ENCODE measurements at regions of chr12 and their contacts with region 1.

Region 1: DNA sequence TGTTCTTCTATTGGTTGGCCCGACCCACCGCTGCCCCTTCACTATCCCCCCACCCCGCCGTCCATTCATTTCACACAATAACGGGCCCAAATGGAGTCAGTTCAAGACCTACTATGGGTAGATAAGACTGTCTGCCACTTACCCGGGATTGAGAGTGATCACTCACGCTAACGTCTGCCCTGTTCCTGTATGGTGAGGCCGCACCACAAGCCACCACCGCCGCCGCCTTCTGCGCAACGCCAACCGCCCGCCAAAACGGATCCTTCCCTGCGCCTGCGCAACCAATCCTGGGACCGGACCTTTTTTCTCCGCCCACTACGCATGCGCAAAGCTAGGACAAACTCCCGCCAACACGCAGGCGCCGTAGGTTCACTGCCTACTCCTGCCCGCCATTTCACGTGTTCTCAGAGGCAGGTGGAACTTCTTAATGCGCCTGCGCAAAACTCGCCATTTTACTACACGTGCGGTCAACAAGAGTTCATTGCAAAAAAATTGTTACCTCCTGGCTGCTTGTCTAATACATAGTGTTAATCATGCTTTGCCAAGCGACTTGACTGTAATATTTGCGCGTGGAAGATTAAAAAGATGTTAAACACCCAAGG is at the start of gene CBX5:
- DNase-seq: peak; percentile 100
- ATAC-seq: peak; percentile 44
- H3K4me3 ChIP-seq: peak within 1 kb of the TSS; percentile 79 to 99 (median 99)
- H3K4me3 Mint-ChIP-seq: no peak within 1 kb of the TSS
- H3K27ac ChIP-seq: peak within 1 kb of the TSS; percentile 96 to 97
- H3K27ac Mint-ChIP-seq: no peak within 1 kb of the TSS
- H3K4me1 ChIP-seq: peaks cover 50 to 54% of the 10 kb centered on the region in 2 donors
- H3K4me1 Mint-ChIP-seq: peaks cover 49% of the 10 kb centered on the region
- H3K27me3 ChIP-seq: no peaks in the 10 kb centered on the region
- H3K27me3 Mint-ChIP-seq: no peaks in the 10 kb centered on the region
- CTCF ChIP-seq: no peak
- total RNA-seq, gene CBX5: 64.8 and 66.2 TPM in 2 replicates

Region 2: GRCh38 chr12:54191550-54192022 is 88.4 kb before region 1 on chr12:
- CTCF ChIA-PET with region 1: no interaction called
- POLR2A ChIA-PET with region 1: interaction called, 3 read pairs
- intact Hi-C with region 1: loop called (anchors 1 kb)
- DNase-seq: peak; percentile 90
- ATAC-seq: peak; percentile 64
- H3K4me3 ChIP-seq: no peak overlapping the region
- H3K4me3 Mint-ChIP-seq: no peak overlapping the region
- H3K27ac ChIP-seq: no peak overlapping the region
- H3K27ac Mint-ChIP-seq: peak overlapping the region; percentile 61
- H3K4me1 ChIP-seq: peaks cover 27 to 42% of the 10 kb centered on the region in 2 donors
- H3K4me1 Mint-ChIP-seq: peaks cover 41% of the 10 kb centered on the region
- H3K27me3 ChIP-seq: peaks cover 0 to 42% (median 12%) of the 10 kb centered on the region in 4 experiments
- H3K27me3 Mint-ChIP-seq: peaks cover 35% of the 10 kb centered on the region
- CTCF ChIP-seq: peak; percentile 77

Region 3: DNA sequence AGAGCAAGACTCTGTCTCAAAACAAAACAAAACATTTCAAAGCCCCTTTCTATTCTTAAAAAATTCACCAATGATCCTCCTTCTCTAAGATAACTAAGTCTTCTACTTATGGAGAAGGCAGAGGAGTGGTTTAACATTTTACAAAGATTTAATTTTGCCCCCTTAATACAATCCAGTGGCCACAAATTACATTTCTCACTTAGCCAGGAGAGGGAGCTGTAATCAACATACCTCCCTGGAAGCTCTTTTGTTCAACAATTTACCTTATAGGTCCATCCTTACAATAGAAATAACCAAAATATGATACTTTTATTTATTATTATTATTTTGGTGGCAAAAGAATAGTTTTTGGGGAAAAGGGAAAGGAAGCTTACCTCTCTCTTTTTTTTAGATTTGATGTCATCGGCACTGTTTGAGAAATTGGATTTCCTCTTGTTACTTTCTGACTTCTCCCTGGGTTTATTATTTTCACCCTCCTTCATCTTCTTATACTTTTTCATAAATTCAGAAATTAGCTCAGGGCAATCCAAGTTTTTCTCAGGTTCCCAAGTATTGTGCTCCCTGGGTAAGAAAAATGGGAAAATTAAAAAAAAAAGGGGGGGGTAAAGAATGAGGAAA is 28.2 kb before region 1 on chr12:
- CTCF ChIA-PET with region 1: interaction called, 10 read pairs
- POLR2A ChIA-PET with region 1: interaction called, 9 read pairs
- intact Hi-C with region 1: no loop called
- DNase-seq: peak; percentile 63
- ATAC-seq: peak; percentile 56
- H3K4me3 ChIP-seq: no peak overlapping the region
- H3K4me3 Mint-ChIP-seq: no peak overlapping the region
- H3K27ac ChIP-seq: no peak overlapping the region
- H3K27ac Mint-ChIP-seq: no peak overlapping the region
- H3K4me1 ChIP-seq: peaks cover 0 to 4% of the 10 kb centered on the region in 2 donors
- H3K4me1 Mint-ChIP-seq: peaks cover 6% of the 10 kb centered on the region
- H3K27me3 ChIP-seq: no peaks in the 10 kb centered on the region
- H3K27me3 Mint-ChIP-seq: no peaks in the 10 kb centered on the region
- CTCF ChIP-seq: peak; percentile 77

Region 4: DNA sequence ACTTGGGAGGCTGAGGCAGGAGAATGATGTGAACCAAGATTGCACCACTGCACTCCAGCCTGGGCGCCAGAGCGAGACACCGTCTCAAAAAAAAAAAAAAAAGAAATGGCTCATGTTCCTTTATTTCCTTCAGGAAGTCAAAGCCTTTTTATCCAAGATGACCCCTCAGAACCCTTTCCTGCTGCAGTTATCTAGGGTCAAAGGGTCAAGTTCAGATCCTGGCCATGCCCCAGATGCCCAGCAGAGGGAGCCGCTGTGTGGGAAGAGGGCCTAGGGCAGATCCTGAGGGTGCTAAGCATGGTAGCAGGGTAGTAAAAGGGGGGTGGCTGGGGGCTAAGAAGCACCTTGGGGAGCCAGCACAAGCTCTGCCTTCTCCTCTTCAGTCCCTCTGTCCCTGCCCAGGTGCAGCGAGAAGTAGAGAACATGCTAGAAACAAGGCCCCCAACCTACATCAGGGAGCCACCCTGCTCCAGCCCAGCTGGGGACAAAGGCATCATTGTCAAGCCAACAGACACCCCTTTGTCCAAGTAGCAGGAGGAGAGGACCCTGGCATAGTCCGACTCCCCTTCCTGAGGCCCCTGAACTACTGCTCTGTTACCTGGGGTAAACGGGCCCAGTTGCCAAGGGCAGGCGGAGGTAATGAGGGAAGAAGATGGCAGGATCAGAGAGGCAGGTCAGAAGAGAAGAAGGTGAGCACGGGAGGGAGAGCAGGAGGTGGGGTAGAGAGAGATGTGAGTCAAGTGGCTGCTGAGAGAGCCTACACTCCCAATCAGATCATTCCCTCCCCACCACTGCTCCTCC is 14.4 kb after region 1 on chr12:
- CTCF ChIA-PET with region 1: interaction called, 16 read pairs
- POLR2A ChIA-PET with region 1: interaction called, 6 read pairs
- intact Hi-C with region 1: no loop called
- DNase-seq: peak; percentile 59
- ATAC-seq: peak; percentile 74
- H3K4me3 ChIP-seq: no peak overlapping the region
- H3K4me3 Mint-ChIP-seq: no peak overlapping the region
- H3K27ac ChIP-seq: no peak overlapping the region
- H3K27ac Mint-ChIP-seq: no peak overlapping the region
- H3K4me1 ChIP-seq: peaks cover 15 to 18% of the 10 kb centered on the region in 2 donors
- H3K4me1 Mint-ChIP-seq: peaks cover 15% of the 10 kb centered on the region
- H3K27me3 ChIP-seq: peaks cover 0 to 16% (median 6%) of the 10 kb centered on the region in 4 experiments
- H3K27me3 Mint-ChIP-seq: peaks cover 15% of the 10 kb centered on the region
- CTCF ChIP-seq: peak; percentile 48

Region 5: GRCh38 chr12:54359033-54359761 is 79.2 kb after region 1 on chr12:
- CTCF ChIA-PET with region 1: interaction called, 4 read pairs
- POLR2A ChIA-PET with region 1: interaction called, 8 read pairs
- intact Hi-C with region 1: loop called (anchors 1 kb)
- DNase-seq: peak; percentile 96
- ATAC-seq: peak; percentile 98
- H3K4me3 ChIP-seq: peak overlapping the region; percentile 56 to 92 (median 85)
- H3K4me3 Mint-ChIP-seq: no peak overlapping the region
- H3K27ac ChIP-seq: peak overlapping the region; percentile 40 to 81
- H3K27ac Mint-ChIP-seq: no peak overlapping the region
- H3K4me1 ChIP-seq: peaks cover 15 to 17% of the 10 kb centered on the region in 2 donors
- H3K4me1 Mint-ChIP-seq: peaks cover 10% of the 10 kb centered on the region
- H3K27me3 ChIP-seq: no peaks in the 10 kb centered on the region
- H3K27me3 Mint-ChIP-seq: no peaks in the 10 kb centered on the region
- CTCF ChIP-seq: no peak

Region 6: GRCh38 chr12:54398995-54399793 is 119.2 kb after region 1 on chr12:
- CTCF ChIA-PET with region 1: interaction called, 3 read pairs
- POLR2A ChIA-PET with region 1: interaction called, 12 read pairs
- intact Hi-C with region 1: no loop called
- DNase-seq: peak; percentile 88
- ATAC-seq: peak; percentile 99
- H3K4me3 ChIP-seq: no peak overlapping the region
- H3K4me3 Mint-ChIP-seq: no peak overlapping the region
- H3K27ac ChIP-seq: no peak overlapping the region
- H3K27ac Mint-ChIP-seq: no peak overlapping the region
- H3K4me1 ChIP-seq: peaks cover 0 to 1% of the 10 kb centered on the region in 2 donors
- H3K4me1 Mint-ChIP-seq: peaks cover 6% of the 10 kb centered on the region
- H3K27me3 ChIP-seq: no peaks in the 10 kb centered on the region
- H3K27me3 Mint-ChIP-seq: no peaks in the 10 kb centered on the region
- CTCF ChIP-seq: peak; percentile 98